Heart left ventricle (tissue), 16 donors: ENCODE measurements at regions of chr10 and their contacts with region 1.

Region 1: GRCh38 chr10:62038609-62039190 is 137.2 kb downstream of the ARID5B start:
- DNase-seq: peak; percentile 73 to 79 (median 74)
- ATAC-seq: peak in 3 of 4 donors; percentile 64 to 78 (median 74)
- H3K4me3 ChIP-seq: peak overlapping the region in 7 of 12 donors; percentile 20 to 46 (median 35)
- H3K27ac ChIP-seq: peak overlapping the region in 7 of 12 donors; percentile 22 to 69 (median 33)
- H3K4me1 ChIP-seq: peaks cover 0 to 58% (median 26%) of the 10 kb centered on the region in 12 donors
- H3K27me3 ChIP-seq: no peaks in the 10 kb centered on the region
- CTCF ChIP-seq: peak; percentile 74 to 96 (median 85)
- POLR2A ChIP-seq: no peak

Region 2: DNA sequence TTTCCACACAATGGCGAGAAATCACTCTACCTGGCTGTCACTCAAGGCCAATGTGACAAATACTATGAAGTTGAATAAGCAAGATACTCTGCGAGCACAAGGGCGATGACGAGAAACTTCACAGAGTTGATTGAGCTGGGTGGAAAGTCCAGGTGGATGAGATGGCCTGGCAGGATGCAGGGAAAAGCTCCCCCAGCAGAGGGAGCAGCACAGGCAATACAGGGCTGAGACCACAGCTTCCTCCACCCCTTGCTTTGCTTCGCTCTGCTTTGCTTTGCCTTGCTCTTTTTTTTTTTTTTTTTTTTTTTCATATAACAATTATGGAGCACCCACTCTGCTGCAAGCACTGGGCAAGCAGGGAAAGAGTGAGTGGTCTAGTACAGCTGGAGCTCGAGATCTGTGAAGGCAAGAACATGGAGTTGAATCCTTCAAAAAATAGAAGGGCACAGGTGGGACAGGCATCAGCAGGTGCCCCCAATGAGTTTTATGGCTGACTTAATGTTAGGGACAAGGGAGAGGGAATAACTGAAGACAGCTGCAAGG is 287.7 kb before region 1 on chr10:
- intact Hi-C with region 1: loop called in 2 of 10 experiments (anchors 10 kb)
- DNase-seq: peak; percentile 43 to 65 (median 48)
- ATAC-seq: peak in 3 of 4 donors; percentile 81 to 85 (median 81)
- H3K4me3 ChIP-seq: no peak overlapping the region
- H3K27ac ChIP-seq: no peak overlapping the region
- H3K4me1 ChIP-seq: peaks cover 0 to 18% (median 0%) of the 10 kb centered on the region in 12 donors
- H3K27me3 ChIP-seq: no peaks in the 10 kb centered on the region
- CTCF ChIP-seq: peak; percentile 41 to 73 (median 62)
- POLR2A ChIP-seq: no peak

Region 3: GRCh38 chr10:61896854-61897661 is 141.6 kb before region 1 on chr10:
- intact Hi-C with region 1: loop called in 8 of 10 experiments (anchors 2 to 10 kb)
- DNase-seq: peak; percentile 48 to 78 (median 64)
- ATAC-seq: peak; percentile 74 to 89 (median 86)
- H3K4me3 ChIP-seq: peak overlapping the region; percentile 10 to 57 (median 46)
- H3K27ac ChIP-seq: peak overlapping the region in 11 of 12 donors; percentile 31 to 77 (median 61)
- H3K4me1 ChIP-seq: peaks cover 0 to 38% (median 17%) of the 10 kb centered on the region in 12 donors
- H3K27me3 ChIP-seq: no peaks in the 10 kb centered on the region
- CTCF ChIP-seq: peak; percentile 55 to 79 (median 70)
- POLR2A ChIP-seq: no peak

Region 4: DNA sequence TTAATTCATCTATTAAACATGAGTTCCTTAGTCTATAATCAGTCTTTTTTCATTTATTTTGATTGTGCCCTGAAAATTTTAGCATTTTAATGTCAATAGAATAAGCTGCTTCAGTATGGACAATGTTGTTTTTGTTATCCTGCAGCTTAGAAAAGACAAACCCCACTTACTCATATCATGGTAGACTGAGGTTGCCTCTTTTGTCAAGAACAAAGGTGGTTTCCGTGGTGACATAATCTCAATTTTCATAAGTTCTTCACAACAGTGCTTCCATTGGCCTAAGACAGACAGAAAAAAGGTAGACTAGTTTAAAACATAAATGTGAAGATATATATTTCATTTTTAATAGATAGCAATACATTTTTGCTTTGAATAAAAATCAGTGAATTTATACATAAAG is 160.9 kb after region 1 on chr10:
- intact Hi-C with region 1: loop called in 2 of 10 experiments (anchors 5 kb)
- DNase-seq: no peak
- ATAC-seq: no peak
- H3K4me3 ChIP-seq: no peak overlapping the region
- H3K27ac ChIP-seq: no peak overlapping the region
- H3K4me1 ChIP-seq: peaks cover 0 to 3% (median 0%) of the 10 kb centered on the region in 12 donors
- H3K27me3 ChIP-seq: no peaks in the 10 kb centered on the region
- CTCF ChIP-seq: no peak
- POLR2A ChIP-seq: no peak

Region 5: GRCh38 chr10:62244780-62245467 is 206.2 kb after region 1 on chr10:
- intact Hi-C with region 1: loop called (anchors 1 to 2 kb)
- DNase-seq: peak in 2 of 5 donors; percentile 56 to 57
- ATAC-seq: peak in 3 of 4 donors; percentile 80 to 88 (median 85)
- H3K4me3 ChIP-seq: peak overlapping the region in 3 of 12 donors; percentile 14 to 48 (median 31)
- H3K27ac ChIP-seq: peak overlapping the region in 2 of 12 donors; percentile 7 to 85
- H3K4me1 ChIP-seq: peaks cover 0 to 38% (median 6%) of the 10 kb centered on the region in 12 donors
- H3K27me3 ChIP-seq: no peaks in the 10 kb centered on the region
- CTCF ChIP-seq: peak; percentile 80 to 96 (median 88)
- POLR2A ChIP-seq: no peak

Region 6: DNA sequence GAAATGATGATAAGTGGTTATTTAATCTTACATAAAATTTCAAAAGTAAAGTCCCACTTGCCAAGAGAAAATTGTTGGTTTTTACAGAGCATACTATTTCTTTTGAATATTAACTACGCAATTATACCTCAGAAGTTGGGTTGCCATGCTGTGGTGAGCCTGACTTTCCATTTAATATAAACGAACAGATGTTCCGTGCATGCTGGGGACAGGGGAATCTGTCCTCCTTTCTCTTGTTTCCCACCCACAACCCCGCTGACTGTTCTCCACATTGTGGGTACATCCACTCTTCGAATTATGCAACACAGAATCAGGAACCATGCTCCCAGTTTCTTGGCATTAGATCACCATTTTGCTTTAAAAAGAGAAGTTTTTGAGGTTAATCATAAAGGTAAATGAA is 259.2 kb after region 1 on chr10:
- intact Hi-C with region 1: no loop called
- DNase-seq: no peak
- ATAC-seq: no peak
- H3K4me3 ChIP-seq: no peak overlapping the region
- H3K27ac ChIP-seq: no peak overlapping the region
- H3K4me1 ChIP-seq: no peaks in the 10 kb centered on the region
- H3K27me3 ChIP-seq: peaks cover 0 to 13% (median 0%) of the 10 kb centered on the region in 9 donors
- CTCF ChIP-seq: no peak
- POLR2A ChIP-seq: no peak

Region 7: DNA sequence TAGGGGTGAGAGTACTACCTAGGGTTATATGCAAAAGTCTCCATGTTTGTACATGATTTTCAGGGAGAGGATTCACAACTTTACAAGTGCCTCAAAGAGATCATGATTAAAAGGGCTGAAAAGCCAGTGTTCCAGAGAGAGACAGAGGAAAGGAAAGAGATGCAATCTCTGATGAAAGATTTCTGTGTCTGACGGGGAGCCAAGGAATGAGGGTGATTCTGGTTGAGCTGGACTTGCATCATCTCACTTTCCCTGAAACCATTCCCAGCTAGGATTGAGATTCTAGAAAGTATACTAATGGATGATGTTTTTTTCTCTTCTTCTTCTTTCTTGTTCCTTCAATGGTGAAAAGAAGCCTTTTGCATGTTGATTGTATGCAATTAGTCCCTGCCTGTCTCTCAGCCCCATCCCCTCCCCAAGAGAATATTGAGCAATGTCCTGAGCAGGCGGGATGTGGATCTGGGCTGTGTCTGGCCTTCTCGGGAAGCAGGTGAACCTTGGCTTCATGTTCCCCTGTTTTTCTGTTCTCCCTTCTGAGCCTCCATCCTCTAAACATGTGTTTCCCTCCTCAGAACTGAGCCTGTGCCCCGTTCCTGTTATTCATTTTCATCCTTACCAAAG is 521.6 kb after region 1 on chr10:
- intact Hi-C with region 1: no loop called
- DNase-seq: peak in 2 of 5 donors; percentile 11 to 33
- ATAC-seq: peak in 1 of 4 donors; percentile 40
- H3K4me3 ChIP-seq: no peak overlapping the region
- H3K27ac ChIP-seq: peak overlapping the region in 2 of 12 donors; percentile 8 to 30
- H3K4me1 ChIP-seq: peaks cover 0 to 13% (median 2%) of the 10 kb centered on the region in 12 donors
- H3K27me3 ChIP-seq: peaks cover 0 to 2% (median 0%) of the 10 kb centered on the region in 9 donors
- CTCF ChIP-seq: no peak
- POLR2A ChIP-seq: no peak